Vagina (tissue), 2 donors: ENCODE measurements at regions of chr3 and their contacts with region 1.

Region 1: DNA sequence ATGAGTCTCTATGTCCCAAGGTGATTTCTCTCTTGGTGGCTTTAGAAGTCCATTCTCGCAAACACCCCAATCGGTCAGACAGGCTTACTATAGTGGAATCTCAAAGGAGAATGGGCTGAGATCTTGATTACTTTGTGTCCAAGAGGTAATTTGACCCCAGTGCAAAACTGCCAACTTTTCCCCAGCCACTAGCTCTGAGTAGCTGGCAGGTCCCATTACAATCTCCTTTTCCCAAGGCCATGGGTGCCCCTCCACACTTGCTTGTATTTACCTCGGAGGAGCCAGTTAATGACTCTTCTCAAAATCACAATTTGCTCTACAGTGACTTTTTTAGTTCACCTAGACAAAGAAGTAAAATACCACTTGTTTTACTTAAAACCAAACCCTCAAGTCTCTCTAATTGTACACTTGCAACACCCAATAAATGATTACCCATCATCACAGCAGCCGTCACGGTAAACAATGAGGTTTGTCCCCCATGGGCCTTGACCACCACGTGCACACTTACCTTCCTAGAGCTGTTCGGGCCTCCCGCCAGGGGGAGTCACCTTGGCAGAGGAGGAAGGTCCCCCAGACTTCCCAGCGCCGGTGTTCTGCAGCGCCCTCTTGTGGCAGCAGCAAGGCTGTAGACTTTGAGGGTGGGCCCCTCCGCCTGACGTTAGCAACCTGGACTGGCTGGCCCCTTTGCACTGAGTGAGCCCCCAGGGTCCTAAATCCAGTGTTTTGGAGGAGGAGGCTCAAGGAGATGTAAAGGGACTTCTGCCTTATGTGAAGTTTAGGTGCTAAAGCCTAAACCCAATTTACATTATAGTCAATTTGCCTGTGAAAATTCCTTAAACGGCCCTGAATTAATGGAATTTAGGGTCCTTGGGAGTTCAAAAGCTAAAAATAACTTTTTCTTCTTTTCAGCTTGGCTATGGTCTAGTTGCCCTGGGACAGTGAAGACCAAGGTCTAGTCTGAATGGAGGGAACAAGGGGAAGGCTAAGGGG is 18.6 kb upstream of the HDAC11 start:
- DNase-seq: no peak
- H3K4me3 ChIP-seq: no peak overlapping the region
- H3K27ac ChIP-seq: no peak overlapping the region
- H3K4me1 ChIP-seq: no peaks in the 10 kb centered on the region
- H3K27me3 ChIP-seq: no peaks in the 10 kb centered on the region
- CTCF ChIP-seq: peak in 1 of 3 experiments; percentile 11
- POLR2A ChIP-seq: no peak

Region 2: DNA sequence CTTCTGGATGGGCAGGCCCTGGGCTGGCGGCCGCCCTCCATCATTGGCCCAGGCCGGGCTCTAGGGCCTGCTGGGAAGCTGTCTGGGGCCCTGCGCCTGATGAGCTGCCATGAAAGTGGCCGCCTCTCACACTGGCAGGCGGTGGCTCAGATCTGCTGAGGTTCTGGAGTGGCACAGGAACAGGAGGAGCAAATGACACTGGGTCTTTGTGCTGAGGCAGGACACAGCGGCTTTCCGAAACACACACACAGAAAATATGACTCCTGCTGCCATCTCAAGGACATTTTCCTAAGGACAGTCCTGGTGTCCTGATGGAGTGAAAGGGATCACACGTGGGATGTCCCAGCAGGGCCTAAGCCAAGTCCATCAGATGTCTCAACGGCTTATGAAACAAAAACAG is 144.9 kb before region 1 on chr3:
- intact Hi-C with region 1: loop called (anchors 10 kb)
- DNase-seq: no peak
- H3K4me3 ChIP-seq: no peak overlapping the region
- H3K27ac ChIP-seq: no peak overlapping the region
- H3K4me1 ChIP-seq: no peaks in the 10 kb centered on the region
- H3K27me3 ChIP-seq: no peaks in the 10 kb centered on the region
- CTCF ChIP-seq: no peak
- POLR2A ChIP-seq: no peak

Region 3: GRCh38 chr3:13544293-13544831 is 82.9 kb after region 1 on chr3:
- intact Hi-C with region 1: no loop called
- DNase-seq: no peak
- H3K4me3 ChIP-seq: no peak overlapping the region
- H3K27ac ChIP-seq: peak overlapping the region; percentile 93
- H3K4me1 ChIP-seq: peaks cover 35% of the 10 kb centered on the region
- H3K27me3 ChIP-seq: no peaks in the 10 kb centered on the region
- CTCF ChIP-seq: no peak
- POLR2A ChIP-seq: no peak